GM10248 (cell line): ENCODE measurements at regions of chr10 and their contacts with region 1.

Region 1: DNA sequence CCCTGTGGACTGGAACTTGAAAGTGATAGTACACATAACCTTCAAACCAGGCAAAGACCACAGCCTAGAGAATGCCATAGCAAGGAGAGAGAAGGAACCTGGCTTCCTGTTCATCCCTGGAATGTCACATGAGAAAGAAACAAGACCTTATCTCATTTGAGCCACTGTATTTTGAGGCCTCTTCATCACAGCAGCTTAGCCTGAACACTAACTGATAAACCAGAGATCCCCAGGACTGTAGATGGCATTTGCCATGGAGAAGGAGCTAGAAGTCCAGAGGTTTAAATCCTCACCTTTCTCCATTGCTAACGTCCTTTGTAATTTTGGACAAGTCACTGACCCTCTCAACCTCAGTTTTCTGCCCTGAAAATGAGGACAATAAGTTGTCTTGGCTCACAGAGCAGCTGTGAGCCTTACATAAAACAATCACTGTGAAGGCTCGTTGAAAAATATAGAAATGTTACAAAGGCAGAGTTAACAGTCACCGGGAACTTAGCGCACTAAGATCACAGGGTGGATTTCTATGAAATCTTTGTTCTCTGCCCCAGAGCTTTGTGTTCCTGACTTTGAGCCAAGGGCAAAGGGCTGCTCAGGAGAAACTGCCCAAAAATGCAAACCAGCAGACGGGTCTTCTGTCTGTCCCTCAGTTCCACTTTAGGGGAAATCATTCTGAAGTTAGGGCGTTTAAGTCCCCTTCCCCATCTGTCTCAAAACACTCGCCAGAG is 197.0 kb downstream of the USP6NL start:
- DNase-seq: no peak
- CTCF ChIP-seq: no peak

Region 2: DNA sequence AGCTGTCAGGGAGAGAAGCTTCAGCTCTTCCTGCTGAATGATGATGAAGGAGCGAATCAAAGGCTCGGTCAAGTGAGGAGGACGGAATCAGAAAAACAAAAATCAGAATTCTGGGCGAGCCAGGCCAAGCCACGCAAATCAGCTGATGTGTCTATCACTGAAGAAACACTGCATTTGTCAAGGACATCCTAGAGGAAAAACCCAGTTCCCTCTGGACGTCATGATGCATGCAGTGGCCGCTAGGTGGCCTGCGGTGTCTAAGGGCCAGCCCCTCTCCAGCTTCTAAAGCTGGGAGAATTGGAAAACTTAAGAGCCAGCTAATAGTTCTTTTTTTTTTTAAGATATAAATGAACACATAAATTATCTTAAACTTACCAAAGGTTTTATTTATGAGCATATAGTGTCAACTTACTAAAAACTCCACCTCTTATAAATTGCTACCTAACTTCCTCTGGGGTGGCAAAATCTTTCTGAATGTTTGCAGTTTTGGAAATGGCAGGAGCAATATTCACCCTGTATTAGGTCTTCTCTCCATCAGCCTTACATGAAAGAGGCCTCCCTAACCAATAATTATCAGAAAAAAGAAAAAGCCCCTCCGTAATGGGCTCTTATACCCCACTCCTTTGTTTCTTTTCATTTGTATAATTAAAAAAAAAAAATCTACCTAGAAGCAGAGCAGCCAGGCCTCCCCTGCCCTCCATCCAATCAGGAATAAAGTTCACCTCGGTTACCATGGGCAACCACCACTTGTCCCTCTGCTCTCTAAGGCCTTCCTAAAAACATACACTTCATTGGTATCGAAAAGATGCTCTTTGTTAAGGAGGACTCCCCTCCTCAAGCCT is 10.2 kb after region 1 on chr10:
- CTCF ChIA-PET with region 1: interaction called, 12 read pairs
- POLR2A ChIA-PET with region 1: no interaction called
- DNase-seq: peak; percentile 74
- CTCF ChIP-seq: peak; percentile 90